Adrenal gland (tissue), 19 donors: ENCODE measurements at regions of chr18 and their contacts with region 1.

Region 1: GRCh38 chr18:12317664-12318333 is 9.8 kb downstream of the TUBB6 start:
- DNase-seq: peak in 1 of 7 donors; percentile 46
- H3K4me3 ChIP-seq: no peak overlapping the region
- H3K27ac ChIP-seq: peak overlapping the region in 1 of 5 donors; percentile 41
- H3K4me1 ChIP-seq: no peaks in the 10 kb centered on the region
- H3K27me3 ChIP-seq: no peaks in the 10 kb centered on the region
- CTCF ChIP-seq: no peak
- POLR2A ChIP-seq: no peak

Region 2: DNA sequence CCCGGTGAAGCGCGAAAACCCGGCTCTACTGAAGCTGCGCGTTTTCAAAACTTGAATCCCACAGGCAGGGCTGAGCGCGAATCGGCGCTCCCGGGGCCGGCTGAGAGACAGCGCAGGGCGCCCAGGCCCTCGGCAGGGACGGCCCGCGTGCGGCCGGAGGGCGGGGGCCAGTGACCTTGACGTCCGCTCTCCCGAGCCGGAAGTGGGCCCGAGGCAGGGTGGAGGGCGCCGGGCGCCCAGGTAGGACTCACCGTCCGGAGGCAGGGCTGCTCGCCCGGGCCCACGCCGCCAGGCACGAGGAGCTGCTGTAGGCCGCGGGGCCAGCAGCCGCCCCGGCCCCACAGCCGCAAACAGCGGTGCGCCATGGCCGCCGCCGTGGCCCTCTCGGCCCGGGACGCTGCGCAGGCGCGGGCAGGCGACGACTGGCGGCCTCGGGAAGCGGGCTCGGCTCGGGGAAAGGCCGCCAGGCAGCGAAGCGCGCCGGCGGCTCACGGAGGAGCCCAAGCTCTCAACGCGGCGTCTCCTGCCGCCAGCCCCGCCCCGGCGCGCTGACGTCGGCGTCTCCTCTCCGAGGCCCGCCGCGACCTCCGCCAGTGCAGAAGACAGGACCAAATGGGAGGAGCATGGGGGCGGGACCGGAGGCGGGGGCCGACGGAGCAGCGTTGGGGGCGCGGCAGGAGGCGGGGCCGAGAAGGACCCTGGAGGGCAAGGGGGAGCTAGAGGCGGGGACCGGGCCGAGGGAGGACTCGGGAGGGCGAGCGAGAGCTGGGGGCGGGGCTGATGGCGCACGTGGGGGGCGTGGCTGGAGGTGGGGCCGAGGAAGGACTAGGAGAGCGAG is 59.1 kb after region 1 on chr18 and contains the start of gene AFG3L2:
- intact Hi-C with region 1: loop called in 1 of 2 experiments (anchors 10 kb)
- DNase-seq: peak; percentile 99 to 100 (median 100)
- H3K4me3 ChIP-seq: peak within 1 kb of the TSS; percentile 22 to 94 (median 66)
- H3K27ac ChIP-seq: peak within 1 kb of the TSS; percentile 94 to 100 (median 100)
- H3K4me1 ChIP-seq: peaks cover 20 to 45% of the 10 kb centered on the region in 2 donors
- H3K27me3 ChIP-seq: no peaks in the 10 kb centered on the region
- CTCF ChIP-seq: no peak
- POLR2A ChIP-seq: peak; percentile 94 to 97
- total RNA-seq, gene AFG3L2: 41.0 to 89.8 (median 51.4) TPM